CD14-positive monocyte (primary cell): ENCODE measurements at regions of chr15 and their contacts with region 1.

Region 1: DNA sequence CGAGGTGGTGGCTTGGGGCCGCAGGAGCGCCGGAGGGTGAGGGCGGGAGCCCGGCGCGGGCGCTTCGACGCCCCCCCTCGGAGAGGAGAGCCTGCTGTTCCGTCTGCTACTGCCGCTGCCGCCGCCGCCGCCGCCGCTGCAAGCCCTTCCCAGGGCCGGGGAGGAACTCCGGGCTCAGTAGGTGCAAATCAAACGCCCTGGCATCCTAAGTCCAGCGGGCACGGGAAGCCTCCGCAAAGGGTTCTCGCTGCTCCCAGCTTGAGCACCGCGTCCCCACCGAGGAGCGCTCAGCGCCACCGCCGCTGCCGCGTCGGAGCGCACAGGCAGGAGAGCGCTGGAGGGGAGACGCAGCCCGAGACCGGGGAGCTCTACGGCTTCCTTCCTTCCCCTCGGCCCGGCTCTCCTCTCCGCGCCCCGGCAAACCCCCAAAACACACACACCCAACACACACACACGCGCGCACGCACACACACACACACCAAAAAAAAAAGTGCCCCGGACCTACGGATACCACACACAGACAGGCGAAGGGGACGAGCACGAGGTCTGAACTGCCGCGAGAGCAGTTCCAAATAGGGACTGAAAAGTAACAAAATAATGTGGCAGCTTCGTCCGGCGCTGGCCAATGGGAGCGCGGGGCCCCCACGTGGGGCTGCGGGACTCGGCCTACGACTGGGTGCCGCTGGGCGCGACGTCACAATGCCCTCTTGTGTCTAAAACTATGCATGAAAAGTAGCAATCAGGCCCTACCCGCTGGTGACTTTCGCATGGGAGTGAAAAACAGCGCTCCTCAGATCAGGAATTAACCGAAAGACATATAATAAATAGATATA is at the start of gene TLE3:
- DNase-seq: peak; percentile 98 to 99 (median 98)
- H3K4me3 ChIP-seq: peak within 1 kb of the TSS; percentile 84 to 99 (median 99)
- H3K4me3 Mint-ChIP-seq: peak within 1 kb of the TSS; percentile 98 to 99
- H3K27ac ChIP-seq: peak within 1 kb of the TSS; percentile 78 to 89
- H3K27ac Mint-ChIP-seq: peak within 1 kb of the TSS; percentile 96 to 99 (median 98)
- H3K4me1 ChIP-seq: peaks cover 65 to 81% of the 10 kb centered on the region in 2 donors
- H3K4me1 Mint-ChIP-seq: peaks cover 54% of the 10 kb centered on the region
- H3K27me3 ChIP-seq: peaks cover 13 to 27% of the 10 kb centered on the region in 2 donors
- H3K27me3 Mint-ChIP-seq: peaks cover 21 to 42% (median 31%) of the 10 kb centered on the region in 3 donors
- CTCF ChIP-seq: peak; percentile 37
- polyA plus RNA-seq, gene TLE3: 12.8 to 117 (median 23.6) TPM

Region 2: DNA sequence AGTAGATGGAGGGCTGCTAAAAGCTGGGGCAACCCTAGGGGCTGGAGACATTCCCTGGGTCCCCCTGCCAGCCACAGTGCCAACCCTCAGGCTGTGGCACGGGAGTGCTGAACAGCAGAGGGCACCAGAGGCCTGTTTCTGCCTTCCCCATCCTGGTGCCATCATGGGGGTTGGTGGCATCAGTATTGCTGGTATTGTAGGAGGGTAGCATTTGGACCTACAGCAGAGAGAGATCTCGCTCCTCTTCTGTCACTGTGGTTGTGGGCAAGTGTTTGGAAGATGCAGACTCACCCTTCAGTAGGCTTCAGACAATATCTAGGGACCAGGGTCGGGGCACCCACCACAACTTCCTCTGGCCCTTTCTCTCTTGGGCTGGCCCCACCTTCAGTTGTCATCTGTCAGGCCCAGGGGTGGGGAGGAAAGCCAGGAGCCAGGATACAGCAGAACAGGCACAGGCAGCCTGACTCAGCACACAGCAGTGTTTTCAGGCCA is 521.5 kb before region 1 on chr15:
- intact Hi-C with region 1: loop called in 1 of 2 experiments (anchors 10 kb)
- DNase-seq: peak; percentile 69 to 77 (median 71)
- H3K4me3 ChIP-seq: no peak overlapping the region
- H3K4me3 Mint-ChIP-seq: peak overlapping the region in 1 of 2 donors; percentile 35
- H3K27ac ChIP-seq: no peak overlapping the region
- H3K27ac Mint-ChIP-seq: peak overlapping the region; percentile 55 to 78 (median 63)
- H3K4me1 ChIP-seq: peaks cover 24 to 29% of the 10 kb centered on the region in 2 donors
- H3K4me1 Mint-ChIP-seq: peaks cover 45% of the 10 kb centered on the region
- H3K27me3 ChIP-seq: no peaks in the 10 kb centered on the region
- H3K27me3 Mint-ChIP-seq: peaks cover 9 to 11% (median 11%) of the 10 kb centered on the region in 3 donors
- CTCF ChIP-seq: peak; percentile 82

Region 3: DNA sequence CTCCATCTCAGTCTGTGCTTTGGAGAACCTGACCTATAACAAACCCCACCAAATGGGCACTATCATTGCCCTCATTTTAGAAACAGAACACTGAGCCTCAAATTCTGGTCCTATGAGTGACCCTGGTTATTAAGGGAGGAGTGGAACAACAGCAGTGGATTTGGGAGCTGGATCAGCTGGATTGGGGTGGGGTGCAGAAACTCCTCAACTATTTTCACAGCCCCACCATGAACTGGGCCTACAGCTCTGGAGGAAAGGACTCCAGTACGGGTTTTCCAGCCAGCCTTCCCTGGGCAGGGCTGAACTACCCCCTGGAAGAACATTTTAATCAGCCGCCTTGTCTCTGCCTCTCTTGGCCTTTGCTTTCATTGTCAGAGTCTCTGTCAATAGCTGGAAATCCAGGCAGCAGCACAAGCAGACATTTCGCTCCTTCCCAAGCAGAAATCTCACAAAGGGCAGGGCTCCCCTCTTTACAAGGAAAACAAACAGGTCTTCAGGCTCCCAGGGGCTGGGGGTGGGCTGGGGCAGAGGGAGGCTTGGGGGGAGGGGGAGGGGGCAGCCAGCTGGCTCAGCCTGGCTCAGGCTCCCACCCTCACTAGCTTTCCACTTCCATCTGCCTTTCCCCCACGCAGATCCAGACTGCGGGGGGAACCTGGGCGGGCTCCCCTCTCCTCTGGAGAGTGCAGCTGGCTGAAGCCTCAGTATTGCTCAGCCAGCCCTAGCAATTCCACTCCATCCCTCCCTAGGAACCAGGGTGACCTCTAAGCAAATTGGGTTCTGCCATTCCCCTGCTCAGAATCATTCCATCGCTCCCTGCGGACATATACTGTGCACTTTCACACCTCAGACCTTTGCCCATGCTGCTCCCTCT is 13.9 kb after region 1 on chr15:
- intact Hi-C with region 1: loop called in 1 of 2 experiments (anchors 2 kb)
- DNase-seq: no peak
- H3K4me3 ChIP-seq: no peak overlapping the region
- H3K4me3 Mint-ChIP-seq: peak overlapping the region in 1 of 2 donors; percentile 4
- H3K27ac ChIP-seq: no peak overlapping the region
- H3K27ac Mint-ChIP-seq: no peak overlapping the region
- H3K4me1 ChIP-seq: peaks cover 40 to 41% of the 10 kb centered on the region in 2 donors
- H3K4me1 Mint-ChIP-seq: peaks cover 51% of the 10 kb centered on the region
- H3K27me3 ChIP-seq: no peaks in the 10 kb centered on the region
- H3K27me3 Mint-ChIP-seq: peaks cover 3 to 13% (median 8%) of the 10 kb centered on the region in 3 donors
- CTCF ChIP-seq: no peak

Region 4: DNA sequence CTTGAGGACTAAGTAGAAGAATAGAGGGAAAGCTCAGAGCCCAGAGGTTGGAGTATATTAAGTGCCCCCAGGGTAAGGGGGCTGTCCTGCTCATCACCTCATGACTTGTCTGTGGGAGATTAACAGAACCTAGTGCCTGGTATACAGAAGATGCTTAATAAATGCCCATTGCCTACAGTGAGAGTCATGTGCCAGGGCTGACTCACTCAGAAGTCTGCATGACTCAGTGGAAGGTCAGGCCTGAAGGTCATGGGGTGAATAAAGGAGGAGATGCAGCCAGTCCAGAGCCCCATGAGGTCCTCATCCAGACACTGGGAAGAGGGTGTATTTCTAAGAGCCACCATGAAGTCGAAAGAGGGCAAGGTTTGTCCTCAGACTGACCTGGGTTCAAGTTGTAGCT is 62.7 kb after region 1 on chr15:
- intact Hi-C with region 1: loop called in 1 of 2 experiments (anchors 1 kb)
- DNase-seq: peak; percentile 65 to 94 (median 73)
- H3K4me3 ChIP-seq: no peak overlapping the region
- H3K4me3 Mint-ChIP-seq: no peak overlapping the region
- H3K27ac ChIP-seq: no peak overlapping the region
- H3K27ac Mint-ChIP-seq: peak overlapping the region in 3 of 7 donors; percentile 67 to 91 (median 83)
- H3K4me1 ChIP-seq: peaks cover 8 to 13% of the 10 kb centered on the region in 2 donors
- H3K4me1 Mint-ChIP-seq: peaks cover 35% of the 10 kb centered on the region
- H3K27me3 ChIP-seq: no peaks in the 10 kb centered on the region
- H3K27me3 Mint-ChIP-seq: peaks cover 12 to 14% (median 14%) of the 10 kb centered on the region in 3 donors
- CTCF ChIP-seq: no peak

Region 5: GRCh38 chr15:70259028-70259424 is 161.5 kb after region 1 on chr15:
- intact Hi-C with region 1: loop called in 1 of 2 experiments (anchors 5 kb)
- DNase-seq: peak in 2 of 3 donors; percentile 75 to 85
- H3K4me3 ChIP-seq: peak overlapping the region in 1 of 3 experiments; percentile 29
- H3K4me3 Mint-ChIP-seq: peak overlapping the region in 1 of 2 donors; percentile 69
- H3K27ac ChIP-seq: peak overlapping the region; percentile 78 to 86
- H3K27ac Mint-ChIP-seq: peak overlapping the region; percentile 80 to 96 (median 92)
- H3K4me1 ChIP-seq: peaks cover 74 to 80% of the 10 kb centered on the region in 2 donors
- H3K4me1 Mint-ChIP-seq: peaks cover 79% of the 10 kb centered on the region
- H3K27me3 ChIP-seq: no peaks in the 10 kb centered on the region
- H3K27me3 Mint-ChIP-seq: peaks cover 11 to 23% (median 12%) of the 10 kb centered on the region in 3 donors
- CTCF ChIP-seq: no peak

Region 6: GRCh38 chr15:70466895-70467529 is 369.5 kb after region 1 on chr15:
- intact Hi-C with region 1: loop called in 1 of 2 experiments (anchors 1 kb)
- DNase-seq: peak; percentile 57 to 69 (median 60)
- H3K4me3 ChIP-seq: no peak overlapping the region
- H3K4me3 Mint-ChIP-seq: no peak overlapping the region
- H3K27ac ChIP-seq: no peak overlapping the region
- H3K27ac Mint-ChIP-seq: peak overlapping the region in 4 of 7 donors; percentile 23 to 83 (median 64)
- H3K4me1 ChIP-seq: peaks cover 27 to 43% of the 10 kb centered on the region in 2 donors
- H3K4me1 Mint-ChIP-seq: peaks cover 45% of the 10 kb centered on the region
- H3K27me3 ChIP-seq: no peaks in the 10 kb centered on the region
- H3K27me3 Mint-ChIP-seq: peaks cover 6 to 23% (median 7%) of the 10 kb centered on the region in 3 donors
- CTCF ChIP-seq: peak; percentile 58

Region 7: GRCh38 chr15:70504299-70504951 is 406.9 kb after region 1 on chr15:
- intact Hi-C with region 1: loop called (anchors 5 kb)
- DNase-seq: peak; percentile 88 to 96 (median 93)
- H3K4me3 ChIP-seq: peak overlapping the region in 1 of 3 experiments; percentile 47
- H3K4me3 Mint-ChIP-seq: peak overlapping the region; percentile 45 to 74
- H3K27ac ChIP-seq: peak overlapping the region; percentile 50 to 73
- H3K27ac Mint-ChIP-seq: peak overlapping the region; percentile 87 to 96 (median 93)
- H3K4me1 ChIP-seq: peaks cover 64 to 67% of the 10 kb centered on the region in 2 donors
- H3K4me1 Mint-ChIP-seq: peaks cover 73% of the 10 kb centered on the region
- H3K27me3 ChIP-seq: peaks cover 0 to 2% of the 10 kb centered on the region in 2 donors
- H3K27me3 Mint-ChIP-seq: peaks cover 5 to 19% (median 15%) of the 10 kb centered on the region in 3 donors
- CTCF ChIP-seq: no peak